ENCODE measurements at regions of chr20 and their contacts with region 1.

Region 1: DNA sequence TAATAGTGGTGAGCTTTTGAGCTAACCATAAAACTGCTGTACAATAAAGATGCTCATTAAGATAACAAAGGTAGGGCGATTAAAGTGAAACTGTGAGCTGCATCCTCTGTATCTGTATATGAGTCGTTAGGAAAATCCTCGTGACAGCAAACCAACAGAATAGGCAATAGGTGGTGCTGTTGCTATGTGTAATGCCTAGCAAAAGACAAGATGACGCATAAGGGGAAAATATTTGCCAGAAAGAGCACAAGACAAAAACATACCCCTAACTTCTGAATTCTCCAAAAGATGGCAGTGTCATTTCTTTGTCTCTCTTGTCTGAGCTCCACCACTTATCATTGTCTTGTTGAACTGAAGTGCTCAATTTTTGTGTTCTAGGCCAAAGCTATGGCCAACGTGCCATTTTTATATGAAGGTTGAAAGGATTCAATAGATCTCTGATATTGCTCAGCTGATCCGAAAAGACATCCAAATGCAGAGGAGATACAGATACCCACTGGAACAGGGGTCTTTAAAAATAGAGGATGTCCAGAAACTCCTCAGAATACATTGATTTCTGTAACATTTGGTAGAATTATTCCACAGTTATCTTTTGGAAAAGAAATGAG is 56.3 kb upstream of the ANKEF1 start:
- DNase-seq: peak; percentile 27
- H3K4me3 Mint-ChIP-seq: no peak overlapping the region
- H3K27ac Mint-ChIP-seq: no peak overlapping the region
- H3K4me1 Mint-ChIP-seq: peaks cover 5% of the 10 kb centered on the region
- H3K27me3 Mint-ChIP-seq: peaks cover 2% of the 10 kb centered on the region

Region 2: GRCh38 chr20:9616833-9617489 is 361.5 kb before region 1 on chr20:
- CTCF ChIA-PET with region 1: interaction called, 8 read pairs
- POLR2A ChIA-PET with region 1: no interaction called
- intact Hi-C with region 1: loop called (anchors 5 kb)
- DNase-seq: peak; percentile 60
- H3K4me3 Mint-ChIP-seq: no peak overlapping the region
- H3K27ac Mint-ChIP-seq: no peak overlapping the region
- H3K4me1 Mint-ChIP-seq: no peaks in the 10 kb centered on the region
- H3K27me3 Mint-ChIP-seq: peaks cover 3% of the 10 kb centered on the region

Region 3: GRCh38 chr20:10014431-10014830 is 35.9 kb after region 1 on chr20:
- CTCF ChIA-PET with region 1: no interaction called
- POLR2A ChIA-PET with region 1: no interaction called
- intact Hi-C with region 1: no loop called
- DNase-seq: no peak
- H3K4me3 Mint-ChIP-seq: no peak overlapping the region
- H3K27ac Mint-ChIP-seq: no peak overlapping the region
- H3K4me1 Mint-ChIP-seq: no peaks in the 10 kb centered on the region
- H3K27me3 Mint-ChIP-seq: peaks cover 6% of the 10 kb centered on the region

Region 4: GRCh38 chr20:10350188-10350842 is 371.8 kb after region 1 on chr20:
- CTCF ChIA-PET with region 1: interaction called, 5 read pairs
- POLR2A ChIA-PET with region 1: no interaction called
- intact Hi-C with region 1: loop called (anchors 2 kb)
- DNase-seq: no peak
- H3K4me3 Mint-ChIP-seq: no peak overlapping the region
- H3K27ac Mint-ChIP-seq: peak overlapping the region; percentile 75
- H3K4me1 Mint-ChIP-seq: peaks cover 30% of the 10 kb centered on the region
- H3K27me3 Mint-ChIP-seq: no peaks in the 10 kb centered on the region

Region 5: DNA sequence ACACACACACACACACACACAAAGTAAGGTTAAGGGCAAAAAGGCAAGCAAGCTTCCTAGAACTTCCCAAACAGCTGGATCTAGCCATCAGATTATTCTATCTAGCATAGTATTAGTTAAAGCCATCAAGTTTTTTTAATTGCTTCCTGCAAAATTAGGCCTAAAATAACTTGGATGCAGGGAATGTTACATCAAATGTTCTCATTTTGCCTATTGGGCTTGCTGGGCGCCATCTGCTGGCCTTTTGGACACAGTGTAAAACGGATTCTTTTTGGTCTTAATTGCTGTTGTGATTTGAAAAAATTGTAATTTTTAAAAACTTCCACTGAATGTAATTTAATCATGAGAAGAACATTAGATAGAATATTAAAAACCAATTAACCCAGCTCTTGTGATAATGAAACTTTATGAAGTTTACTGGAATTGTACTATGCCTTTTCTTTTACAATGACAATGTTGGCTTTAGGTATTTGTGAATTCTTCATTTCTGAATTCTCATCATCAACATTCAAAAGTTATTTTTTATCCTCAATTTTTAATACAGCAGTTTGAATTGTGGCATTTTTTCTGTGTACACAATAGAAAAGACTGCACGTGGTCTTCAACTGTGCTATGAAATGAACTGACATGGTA is 448.7 kb after region 1 on chr20:
- CTCF ChIA-PET with region 1: interaction called, 50 read pairs
- POLR2A ChIA-PET with region 1: no interaction called
- intact Hi-C with region 1: loop called (anchors 1 kb)
- DNase-seq: peak; percentile 50
- H3K4me3 Mint-ChIP-seq: no peak overlapping the region
- H3K27ac Mint-ChIP-seq: no peak overlapping the region
- H3K4me1 Mint-ChIP-seq: peaks cover 34% of the 10 kb centered on the region
- H3K27me3 Mint-ChIP-seq: no peaks in the 10 kb centered on the region

Region 6: DNA sequence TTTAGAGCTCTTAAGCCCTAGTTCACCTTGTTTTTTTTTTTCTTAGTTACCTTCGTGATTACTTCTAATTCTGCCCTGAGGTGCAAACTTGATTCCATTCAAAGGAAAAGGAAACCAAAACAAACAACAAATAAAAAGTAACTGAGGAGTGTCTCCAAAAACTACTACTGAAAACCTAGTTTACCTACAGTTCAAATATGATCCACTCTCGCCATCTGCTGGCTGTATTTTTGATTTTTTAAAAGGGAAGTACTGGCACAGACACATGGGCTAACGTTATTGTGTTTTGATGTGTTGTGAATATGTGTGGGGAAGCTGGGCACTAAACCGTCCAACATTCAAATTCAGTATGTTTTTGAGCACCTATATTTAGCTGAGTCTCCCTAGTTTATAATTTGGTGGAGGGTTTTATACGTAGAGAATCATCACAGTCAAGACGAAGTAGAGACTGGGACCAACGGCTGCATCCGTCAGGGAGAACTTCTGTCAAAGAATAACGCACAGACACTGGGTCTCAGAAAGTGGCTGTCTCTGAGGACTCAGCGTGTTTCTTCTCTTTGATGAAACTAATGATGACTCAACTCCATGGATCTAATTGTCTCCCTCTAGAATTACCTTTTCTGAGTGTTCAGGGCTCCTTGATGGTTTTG is 1565.7 kb after region 1 on chr20:
- CTCF ChIA-PET with region 1: no interaction called
- POLR2A ChIA-PET with region 1: no interaction called
- intact Hi-C with region 1: loop called (anchors 10 kb)
- DNase-seq: no peak
- H3K4me3 Mint-ChIP-seq: no peak overlapping the region
- H3K27ac Mint-ChIP-seq: no peak overlapping the region
- H3K4me1 Mint-ChIP-seq: no peaks in the 10 kb centered on the region
- H3K27me3 Mint-ChIP-seq: no peaks in the 10 kb centered on the region